ENCODE measurements at regions of chr15 and their contacts with region 1.

Region 1: DNA sequence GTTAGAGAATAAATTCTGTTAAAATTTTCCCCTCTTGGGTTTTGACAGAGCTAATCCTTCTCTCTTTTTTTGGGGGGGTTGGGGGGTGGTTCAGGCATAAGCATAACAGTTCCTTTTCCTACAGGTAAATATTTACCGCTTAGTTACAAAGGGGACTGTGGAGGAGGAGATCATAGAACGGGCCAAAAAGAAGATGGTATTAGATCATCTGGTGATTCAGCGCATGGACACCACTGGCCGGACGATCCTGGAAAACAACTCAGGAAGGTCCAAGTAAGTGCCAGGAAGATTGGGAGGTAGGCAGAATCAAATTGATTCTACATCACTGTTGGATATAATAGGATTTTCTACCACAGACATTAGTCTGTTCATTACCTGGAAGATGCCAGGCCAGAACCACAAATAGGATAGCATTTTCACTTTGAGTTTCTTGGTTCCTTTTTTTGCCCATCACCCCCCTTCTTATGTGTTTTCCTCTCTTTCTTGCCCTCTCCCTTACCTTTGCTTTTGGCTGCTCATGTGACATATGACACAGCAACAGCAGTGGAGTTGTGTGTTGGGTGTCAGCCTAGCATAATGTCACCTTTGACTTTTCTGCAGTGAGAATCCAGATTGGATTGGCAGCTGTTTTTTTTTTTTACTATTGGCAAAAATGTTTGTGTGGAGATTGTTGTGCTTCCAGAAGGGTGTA is 79.0 kb downstream of the CHD2 start:
- DNase-seq: no peak
- H3K4me3 ChIP-seq: no peak overlapping the region
- H3K27ac ChIP-seq: peak overlapping the region; percentile 31
- H3K4me1 ChIP-seq: peaks cover 41% of the 10 kb centered on the region
- H3K27me3 ChIP-seq: no peaks in the 10 kb centered on the region
- CTCF ChIP-seq: no peak

Region 2: GRCh38 chr15:92848852-92849598 is 130.1 kb before region 1 on chr15:
- CTCF ChIA-PET with region 1: no interaction called
- POLR2A ChIA-PET with region 1: no interaction called
- intact Hi-C with region 1: no loop called
- DNase-seq: no peak
- H3K4me3 ChIP-seq: no peak overlapping the region
- H3K27ac ChIP-seq: no peak overlapping the region
- H3K4me1 ChIP-seq: peaks cover 27% of the 10 kb centered on the region
- H3K27me3 ChIP-seq: no peaks in the 10 kb centered on the region
- CTCF ChIP-seq: no peak

Region 3: DNA sequence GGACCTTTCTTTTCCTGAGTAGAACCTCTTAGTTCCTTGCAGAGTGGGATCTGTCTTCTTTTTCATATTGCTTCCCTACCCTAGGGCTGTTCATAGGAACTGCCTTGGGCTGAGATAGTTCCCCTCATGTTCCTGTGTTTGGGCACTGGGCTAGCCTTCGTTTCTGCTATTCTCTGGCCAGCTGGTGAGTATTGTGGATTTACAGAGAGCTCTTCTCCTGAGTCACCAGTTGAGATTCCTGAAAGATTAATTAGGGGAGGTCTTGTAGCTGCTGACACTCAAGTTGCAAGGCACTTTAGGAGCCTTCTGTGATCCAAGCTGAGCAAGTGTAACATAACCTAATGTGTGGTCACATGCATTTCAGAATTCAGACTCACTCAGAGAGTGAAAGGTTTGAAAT is 48.4 kb before region 1 on chr15:
- CTCF ChIA-PET with region 1: no interaction called
- POLR2A ChIA-PET with region 1: no interaction called
- intact Hi-C with region 1: no loop called
- DNase-seq: peak; percentile 25 to 65
- H3K4me3 ChIP-seq: no peak overlapping the region
- H3K27ac ChIP-seq: peak overlapping the region; percentile 8; the same call in 1 of the 2 replicates
- H3K4me1 ChIP-seq: no peaks in the 10 kb centered on the region; the same call in 1 of the 2 replicates
- H3K27me3 ChIP-seq: no peaks in the 10 kb centered on the region
- CTCF ChIP-seq: no peak

Region 4: GRCh38 chr15:93018580-93018979 is 39.4 kb after region 1 on chr15:
- CTCF ChIA-PET with region 1: interaction called, 15 read pairs
- POLR2A ChIA-PET with region 1: no interaction called
- intact Hi-C with region 1: no loop called
- DNase-seq: no peak
- H3K4me3 ChIP-seq: no peak overlapping the region
- H3K27ac ChIP-seq: 0 out of 2 replicates have a peak overlapping the region, but pooled peaks have one; percentile 29
- H3K4me1 ChIP-seq: no peaks in the 10 kb centered on the region
- H3K27me3 ChIP-seq: no peaks in the 10 kb centered on the region
- CTCF ChIP-seq: no peak

Measured in PC-9 (cell line).